ENCODE measurements at regions of chr1 and their contacts with region 1.

Region 1: GRCh38 chr1:52241277-52241676 is 99.4 kb downstream of the ZFYVE9 start:
- DNase-seq: no peak
- ATAC-seq: no peak
- H3K4me3 Mint-ChIP-seq: no peak overlapping the region
- H3K27ac Mint-ChIP-seq: no peak overlapping the region
- H3K4me1 Mint-ChIP-seq: peaks cover 0 to 15% (median 8%) of the 10 kb centered on the region in 4 donors
- H3K27me3 Mint-ChIP-seq: peaks cover 0 to 6% (median 0%) of the 10 kb centered on the region in 5 donors

Region 2: GRCh38 chr1:52159033-52159789 is 82.1 kb before region 1 on chr1:
- POLR2A ChIA-PET with region 1: interaction called, 14 read pairs
- DNase-seq: no peak
- ATAC-seq: no peak
- H3K4me3 Mint-ChIP-seq: peak overlapping the region in 1 of 10 donors; percentile 65
- H3K27ac Mint-ChIP-seq: no peak overlapping the region
- H3K4me1 Mint-ChIP-seq: peaks cover 1 to 24% (median 17%) of the 10 kb centered on the region in 4 donors
- H3K27me3 Mint-ChIP-seq: peaks cover 0 to 2% (median 0%) of the 10 kb centered on the region in 5 donors

Region 3: DNA sequence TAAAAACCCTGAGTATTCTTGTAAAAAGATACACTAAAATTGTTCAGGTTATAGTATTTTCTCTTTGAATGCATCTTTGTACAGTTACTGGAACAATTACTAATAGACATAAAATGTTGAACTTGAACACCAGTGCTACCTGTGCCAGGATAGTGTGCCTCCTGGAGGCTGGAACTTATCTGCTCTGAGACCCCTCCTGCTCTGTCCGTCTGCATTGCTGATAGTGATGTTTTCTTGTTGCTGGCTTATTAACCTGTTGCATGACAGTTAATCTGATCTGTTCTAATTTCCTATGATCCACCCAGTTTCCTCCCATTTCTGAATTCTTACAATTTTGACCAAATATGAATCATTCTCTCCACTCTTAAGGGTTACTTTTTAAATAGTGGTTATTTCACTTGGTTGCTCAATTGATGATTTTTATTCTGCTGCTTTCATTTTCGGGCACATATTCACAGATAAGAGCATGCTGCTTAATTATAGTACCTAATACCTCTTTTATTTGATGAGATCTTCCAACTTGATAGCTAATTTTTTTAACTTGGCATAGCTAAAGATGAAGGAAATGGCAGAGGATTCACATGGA is 23.3 kb after region 1 on chr1:
- POLR2A ChIA-PET with region 1: no interaction called
- DNase-seq: no peak
- ATAC-seq: no peak
- H3K4me3 Mint-ChIP-seq: no peak overlapping the region
- H3K27ac Mint-ChIP-seq: peak overlapping the region in 1 of 10 donors; percentile 37
- H3K4me1 Mint-ChIP-seq: peaks cover 0 to 2% (median 0%) of the 10 kb centered on the region in 4 donors
- H3K27me3 Mint-ChIP-seq: peaks cover 0 to 14% (median 0%) of the 10 kb centered on the region in 5 donors

Measured in naive thymus-derived CD8-positive, alpha-beta T cell (primary cell).